Activated naive CD4-positive, alpha-beta T cell treated with anti-CD3 and anti-CD28 coated beads for 36 hours (primary cell): ENCODE measurements at regions of chr17 and their contacts with region 1.

Region 1: DNA sequence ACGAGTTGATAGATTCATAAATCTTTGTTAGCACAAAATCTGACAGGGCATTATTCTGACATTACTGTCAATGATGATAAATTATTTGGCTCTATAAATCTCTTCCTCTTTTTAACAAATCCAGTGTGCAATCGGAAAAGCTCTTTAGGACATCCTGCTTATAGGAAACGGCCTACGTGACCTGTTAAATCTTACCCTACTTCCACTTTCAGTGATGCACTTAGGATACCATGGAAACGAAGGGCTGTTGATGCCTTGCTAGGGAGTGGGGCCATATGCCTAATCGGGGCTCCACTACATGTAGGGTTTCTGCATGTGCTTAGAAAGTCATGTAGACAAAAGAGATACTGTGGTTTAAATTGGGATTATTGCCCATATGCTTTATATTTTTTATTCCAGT is 27.2 kb downstream of the ZNF594 start:
- DNase-seq: no peak
- H3K4me3 Mint-ChIP-seq: no peak overlapping the region
- H3K27ac Mint-ChIP-seq: no peak overlapping the region
- H3K4me1 Mint-ChIP-seq: no peaks in the 10 kb centered on the region
- H3K27me3 Mint-ChIP-seq: peaks cover 15% of the 10 kb centered on the region

Region 2: GRCh38 chr17:4679658-4680057 is 484.8 kb before region 1 on chr17:
- CTCF ChIA-PET with region 1: no interaction called
- intact Hi-C with region 1: loop called (anchors 10 kb)
- DNase-seq: no peak
- H3K4me3 Mint-ChIP-seq: no peak overlapping the region
- H3K27ac Mint-ChIP-seq: no peak overlapping the region
- H3K4me1 Mint-ChIP-seq: no peaks in the 10 kb centered on the region
- H3K27me3 Mint-ChIP-seq: no peaks in the 10 kb centered on the region

Region 3: GRCh38 chr17:5049314-5049895 is 115.0 kb before region 1 on chr17:
- CTCF ChIA-PET with region 1: no interaction called
- intact Hi-C with region 1: no loop called
- DNase-seq: peak; percentile 74
- H3K4me3 Mint-ChIP-seq: no peak overlapping the region
- H3K27ac Mint-ChIP-seq: peak overlapping the region; percentile 2
- H3K4me1 Mint-ChIP-seq: peaks cover 43% of the 10 kb centered on the region
- H3K27me3 Mint-ChIP-seq: no peaks in the 10 kb centered on the region